ENCODE measurements at regions of chr3 and their contacts with region 1.

Region 1: DNA sequence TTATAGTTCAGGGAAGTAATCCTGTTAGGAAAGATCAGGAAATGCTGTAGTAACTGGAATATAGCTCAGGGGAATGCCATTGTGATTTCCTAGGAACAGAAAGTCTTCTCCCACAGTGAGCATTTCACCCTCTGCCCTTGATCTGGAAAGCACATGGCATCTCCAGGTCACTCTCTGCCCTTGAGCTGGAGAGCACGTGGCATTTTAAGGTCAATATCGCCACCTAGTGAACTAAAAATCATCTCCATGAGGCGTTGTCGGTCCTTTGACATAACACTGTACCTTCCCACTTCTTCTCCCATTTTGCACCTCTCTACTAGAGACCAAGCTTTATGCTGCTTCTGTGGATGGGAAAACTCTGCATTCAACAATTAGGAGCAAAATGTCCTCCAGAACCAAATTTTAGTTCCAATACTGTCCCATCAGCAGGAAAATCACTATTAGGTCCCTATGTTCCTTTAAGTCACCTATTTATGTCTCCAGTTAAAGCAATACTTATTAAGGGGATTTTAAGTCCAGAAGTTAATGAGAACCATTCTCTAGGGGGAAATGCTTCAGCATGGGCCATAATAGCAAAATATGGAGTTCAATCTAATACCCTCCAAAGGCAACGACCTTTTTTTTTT is 54.7 kb upstream of the GK5 start:
- DNase-seq: peak; percentile 62 to 88 (median 70)
- ATAC-seq: peak; percentile 97
- H3K4me3 ChIP-seq: no peak overlapping the region
- H3K27ac ChIP-seq: peak overlapping the region; percentile 16; the same call in 1 of the 3 replicates
- H3K4me1 ChIP-seq: peaks cover 0 to 6% of the 10 kb centered on the region in 2 experiments; a peak in 2 of 5 replicates
- H3K27me3 ChIP-seq: no peaks in the 10 kb centered on the region
- CTCF ChIP-seq: peak; percentile 80 to 85 (median 83)
- EP300 ChIP-seq: no peak; the same call in 1 of the 2 replicates
- POLR2A ChIP-seq: no peak
- RAD21 ChIP-seq: peak; percentile 90 to 96

Region 2: DNA sequence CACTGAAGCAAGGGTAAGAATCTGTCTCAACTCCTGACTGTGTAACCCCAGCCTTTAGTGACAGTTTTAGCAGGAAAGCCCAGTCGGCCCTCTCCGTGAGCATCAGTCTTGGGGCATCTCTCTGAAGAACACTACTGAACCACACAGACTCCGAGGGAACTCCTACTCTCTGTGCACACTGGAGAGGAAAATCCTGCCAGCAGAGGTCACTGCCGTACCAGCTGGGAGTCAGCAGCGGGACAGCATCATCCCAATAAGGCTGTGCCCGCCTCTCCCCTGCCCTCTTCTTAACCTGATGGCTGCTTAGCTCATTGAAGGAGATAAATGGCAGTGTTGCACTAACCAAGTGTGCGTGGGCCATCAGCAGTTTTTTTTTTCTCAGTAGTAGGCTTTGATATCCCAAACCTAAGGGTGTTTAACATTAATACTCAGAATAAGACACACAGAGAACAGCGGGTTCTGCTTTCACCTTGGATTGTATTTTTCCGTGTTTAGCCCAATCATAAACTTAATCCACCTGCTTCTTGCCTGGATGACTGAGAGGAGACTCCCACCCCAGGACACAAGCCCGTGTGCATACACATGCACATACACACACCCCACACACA is 819.9 kb before region 1 on chr3:
- CTCF ChIA-PET with region 1: no interaction called
- POLR2A ChIA-PET with region 1: no interaction called
- in situ Hi-C with region 1: no loop called
- intact Hi-C with region 1: loop called (anchors 5 kb)
- DNase-seq: peak; percentile 70 to 91 (median 77)
- ATAC-seq: peak; percentile 97
- H3K4me3 ChIP-seq: no peak overlapping the region
- H3K27ac ChIP-seq: no peak overlapping the region
- H3K4me1 ChIP-seq: peaks cover 12 to 30% of the 10 kb centered on the region in 2 experiments; a peak in 4 of 5 replicates
- H3K27me3 ChIP-seq: no peaks in the 10 kb centered on the region
- CTCF ChIP-seq: peak; percentile 91 to 96 (median 93)
- EP300 ChIP-seq: no peak
- POLR2A ChIP-seq: no peak
- RAD21 ChIP-seq: peak; percentile 96 to 97

Region 3: GRCh38 chr3:141959921-141960554 is 320.0 kb before region 1 on chr3:
- CTCF ChIA-PET with region 1: interaction called, 3 read pairs
- POLR2A ChIA-PET with region 1: no interaction called
- in situ Hi-C with region 1: loop called (anchors 5 kb)
- intact Hi-C with region 1: loop called (anchors 1 kb)
- DNase-seq: no peak
- ATAC-seq: no peak
- H3K4me3 ChIP-seq: no peak overlapping the region
- H3K27ac ChIP-seq: no peak overlapping the region
- H3K4me1 ChIP-seq: no peaks in the 10 kb centered on the region
- H3K27me3 ChIP-seq: no peaks in the 10 kb centered on the region
- CTCF ChIP-seq: no peak
- EP300 ChIP-seq: no peak
- POLR2A ChIP-seq: no peak
- RAD21 ChIP-seq: no peak

Region 4: GRCh38 chr3:142129516-142130171 is 150.4 kb before region 1 on chr3:
- CTCF ChIA-PET with region 1: interaction called, 15 read pairs
- POLR2A ChIA-PET with region 1: interaction called, 4 read pairs
- in situ Hi-C with region 1: loop called (anchors 5 kb)
- intact Hi-C with region 1: loop called (anchors 1 kb)
- DNase-seq: no peak
- ATAC-seq: no peak
- H3K4me3 ChIP-seq: no peak overlapping the region
- H3K27ac ChIP-seq: no peak overlapping the region
- H3K4me1 ChIP-seq: no peaks in the 10 kb centered on the region
- H3K27me3 ChIP-seq: no peaks in the 10 kb centered on the region
- CTCF ChIP-seq: no peak
- EP300 ChIP-seq: no peak
- POLR2A ChIP-seq: no peak
- RAD21 ChIP-seq: no peak

Region 5: DNA sequence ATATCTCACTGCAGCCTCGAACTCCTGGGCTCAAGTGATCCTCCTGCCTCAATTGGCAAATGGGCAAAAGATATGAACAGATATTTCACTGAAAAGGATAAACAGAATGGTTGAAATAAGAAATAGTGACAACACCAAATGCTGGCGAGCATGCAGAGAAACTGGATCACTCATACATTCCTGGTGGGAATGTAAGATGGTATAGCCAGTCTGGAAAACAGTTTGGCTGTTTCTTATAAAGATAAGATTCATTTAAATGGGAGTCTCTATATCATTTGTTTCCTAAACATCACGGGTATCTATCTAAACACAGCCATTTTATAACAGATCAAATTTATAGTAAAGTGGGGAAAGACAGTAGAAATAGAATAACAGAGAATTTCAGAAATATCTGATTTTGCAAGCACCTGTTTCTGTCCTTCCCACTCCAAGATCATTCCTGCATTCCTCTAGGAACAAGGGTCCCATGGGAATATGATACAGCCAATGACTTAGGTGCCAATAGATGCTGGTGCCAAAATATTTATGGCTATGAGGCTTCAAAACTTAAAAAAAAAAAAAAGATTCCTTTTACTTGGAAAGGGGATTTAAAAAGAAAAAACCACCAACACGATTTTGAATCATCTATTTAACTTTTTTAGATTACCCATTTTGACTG is 120.9 kb before region 1 on chr3:
- CTCF ChIA-PET with region 1: no interaction called
- POLR2A ChIA-PET with region 1: no interaction called
- in situ Hi-C with region 1: no loop called
- intact Hi-C with region 1: no loop called
- DNase-seq: no peak
- ATAC-seq: no peak
- H3K4me3 ChIP-seq: no peak overlapping the region
- H3K27ac ChIP-seq: no peak overlapping the region
- H3K4me1 ChIP-seq: no peaks in the 10 kb centered on the region
- H3K27me3 ChIP-seq: no peaks in the 10 kb centered on the region
- CTCF ChIP-seq: no peak
- EP300 ChIP-seq: no peak
- POLR2A ChIP-seq: no peak
- RAD21 ChIP-seq: no peak

Region 6: DNA sequence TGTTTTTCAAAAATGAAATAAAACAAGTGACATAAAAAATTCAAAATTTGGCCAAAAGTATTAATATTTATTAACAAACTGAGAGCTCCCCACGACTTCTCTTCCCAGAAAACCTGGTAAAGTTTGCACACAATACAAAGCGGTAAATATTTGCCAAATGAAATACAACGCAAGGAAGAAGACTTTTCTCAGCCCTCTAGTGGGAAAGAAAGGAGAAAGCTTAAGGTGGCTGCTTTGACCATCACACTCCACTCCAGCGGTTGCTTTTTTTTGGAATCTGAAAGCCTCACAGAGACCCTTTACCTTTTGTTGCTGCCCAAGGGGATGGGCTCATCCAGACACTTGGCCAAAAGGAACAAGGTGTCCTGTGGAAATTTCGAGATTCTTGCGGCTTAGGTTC is 53.6 kb before region 1 on chr3:
- CTCF ChIA-PET with region 1: no interaction called
- POLR2A ChIA-PET with region 1: no interaction called
- in situ Hi-C with region 1: no loop called
- intact Hi-C with region 1: loop called (anchors 5 kb)
- DNase-seq: peak in 1 of 4 experiments; percentile 22
- ATAC-seq: no peak
- H3K4me3 ChIP-seq: no peak overlapping the region
- H3K27ac ChIP-seq: no peak overlapping the region
- H3K4me1 ChIP-seq: peaks cover 15 to 21% of the 10 kb centered on the region in 2 experiments
- H3K27me3 ChIP-seq: no peaks in the 10 kb centered on the region
- CTCF ChIP-seq: 0 out of 6 replicates have a peak, but pooled peaks of 1 of the 3 experiments have one; percentile 12
- EP300 ChIP-seq: no peak
- POLR2A ChIP-seq: no peak
- RAD21 ChIP-seq: no peak